ENCODE measurements at regions of chr12 and their contacts with region 1.

Region 1: DNA sequence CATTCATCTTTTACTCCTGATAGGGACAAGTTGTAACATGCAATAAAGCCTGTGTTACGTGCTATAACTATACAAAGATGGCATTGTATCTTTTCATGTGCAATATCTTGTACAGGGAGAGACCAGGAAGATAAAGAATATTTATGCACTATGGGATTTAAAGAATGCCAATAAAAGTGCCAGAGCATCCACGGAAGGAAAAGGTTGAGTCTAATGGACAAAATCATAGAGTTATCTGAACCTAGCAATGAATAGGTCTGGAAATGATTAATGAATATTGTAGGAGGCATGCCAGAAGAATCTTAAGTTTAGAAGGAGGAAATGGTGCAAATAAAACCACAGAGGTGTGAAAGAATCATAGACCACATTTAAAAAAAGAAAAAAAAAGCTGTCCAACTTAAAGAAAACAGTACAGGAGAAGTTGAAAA is 263.9 kb downstream of the KCNC2 start:
- DNase-seq: no peak
- ATAC-seq: no peak
- H3K4me3 ChIP-seq: no peak overlapping the region
- H3K27ac ChIP-seq: no peak overlapping the region
- H3K4me1 ChIP-seq: no peaks in the 10 kb centered on the region
- H3K27me3 ChIP-seq: no peaks in the 10 kb centered on the region
- CTCF ChIP-seq: no peak
- POLR2A ChIP-seq: no peak
- RAD21 ChIP-seq: no peak

Region 2: DNA sequence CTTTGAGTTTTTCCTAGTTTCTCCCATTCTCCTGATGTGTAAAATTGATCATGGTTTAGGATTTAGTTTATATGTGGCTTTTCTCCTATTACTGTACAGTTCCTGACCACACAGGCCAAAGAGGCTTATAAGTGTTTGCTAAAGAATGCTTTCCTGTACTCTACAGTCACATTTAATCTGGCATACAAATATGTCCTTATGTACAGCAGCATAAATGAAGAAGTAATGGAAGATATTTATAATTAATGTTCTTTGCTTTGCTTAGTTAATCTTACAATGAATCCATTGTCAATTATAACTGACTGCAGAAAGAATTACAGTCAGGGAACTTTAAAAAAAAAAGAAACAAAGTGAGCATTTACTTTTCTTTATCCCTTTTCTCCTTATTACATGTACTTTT is 30.1 kb before region 1 on chr12:
- CTCF ChIA-PET with region 1: no interaction called
- POLR2A ChIA-PET with region 1: no interaction called
- dilution Hi-C with region 1: no loop called
- in situ Hi-C with region 1: no loop called
- intact Hi-C with region 1: loop called (anchors 1 kb)
- DNase-seq: no peak
- ATAC-seq: no peak
- H3K4me3 ChIP-seq: no peak overlapping the region
- H3K27ac ChIP-seq: no peak overlapping the region
- H3K4me1 ChIP-seq: no peaks in the 10 kb centered on the region
- H3K27me3 ChIP-seq: no peaks in the 10 kb centered on the region
- CTCF ChIP-seq: no peak
- POLR2A ChIP-seq: no peak
- RAD21 ChIP-seq: no peak